ENCODE measurements at regions of chr6 and their contacts with region 1.

Region 1: GRCh38 chr6:85678602-85679444 is 36.1 kb upstream of the SYNCRIP start:
- DNase-seq: peak; percentile 99
- H3K4me3 ChIP-seq: peak overlapping the region; percentile 71
- H3K27ac ChIP-seq: peak overlapping the region; percentile 84
- H3K4me1 ChIP-seq: peaks cover 14% of the 10 kb centered on the region
- H3K27me3 ChIP-seq: no peaks in the 10 kb centered on the region
- CTCF ChIP-seq: no peak

Region 2: GRCh38 chr6:84798257-84798656 is 880.6 kb before region 1 on chr6:
- intact Hi-C with region 1: no loop called
- DNase-seq: no peak
- H3K4me3 ChIP-seq: no peak overlapping the region
- H3K27ac ChIP-seq: no peak overlapping the region
- H3K4me1 ChIP-seq: no peaks in the 10 kb centered on the region
- H3K27me3 ChIP-seq: no peaks in the 10 kb centered on the region
- CTCF ChIP-seq: no peak

Region 3: DNA sequence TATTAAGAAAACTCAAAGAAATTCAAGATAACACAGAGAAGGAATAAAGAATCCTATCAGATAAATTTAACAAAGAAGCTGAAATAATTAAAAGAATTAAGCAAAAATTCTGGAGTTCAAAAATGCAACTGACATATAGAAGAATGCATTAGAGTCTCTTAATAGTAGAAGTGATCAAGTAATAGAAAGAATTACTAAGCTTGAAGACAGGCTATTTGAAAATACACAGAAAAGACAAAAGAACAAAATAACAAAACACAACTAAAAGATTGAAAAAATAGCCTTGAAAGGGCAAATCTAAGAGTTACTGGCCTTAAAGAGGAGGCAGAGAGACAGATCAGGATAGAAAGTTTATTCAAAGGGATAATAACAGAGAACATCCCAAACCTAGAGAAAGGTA is 97.3 kb before region 1 on chr6:
- intact Hi-C with region 1: no loop called
- DNase-seq: no peak
- H3K4me3 ChIP-seq: no peak overlapping the region
- H3K27ac ChIP-seq: no peak overlapping the region
- H3K4me1 ChIP-seq: peaks cover 4% of the 10 kb centered on the region
- H3K27me3 ChIP-seq: no peaks in the 10 kb centered on the region
- CTCF ChIP-seq: no peak

Region 4: GRCh38 chr6:85593438-85594196 is 85.2 kb before region 1 on chr6 and contains the start of gene SNX14:
- intact Hi-C with region 1: loop called (anchors 5 kb)
- DNase-seq: peak; percentile 97
- H3K4me3 ChIP-seq: peak within 1 kb of the TSS; percentile 70
- H3K27ac ChIP-seq: peak within 1 kb of the TSS; percentile 100
- H3K4me1 ChIP-seq: peaks cover 8% of the 10 kb centered on the region
- H3K27me3 ChIP-seq: no peaks in the 10 kb centered on the region
- CTCF ChIP-seq: no peak
- total RNA-seq, gene SNX14: 52.5 to 80.6 TPM

Region 5: GRCh38 chr6:85824326-85824725 is 145.5 kb after region 1 on chr6:
- intact Hi-C with region 1: no loop called
- DNase-seq: no peak
- H3K4me3 ChIP-seq: no peak overlapping the region
- H3K27ac ChIP-seq: no peak overlapping the region
- H3K4me1 ChIP-seq: no peaks in the 10 kb centered on the region
- H3K27me3 ChIP-seq: no peaks in the 10 kb centered on the region
- CTCF ChIP-seq: no peak